PC-3 (cell line): ENCODE measurements at regions of chr19 and their contacts with region 1.

Region 1: GRCh38 chr19:56333505-56333904 is 18.9 kb upstream of the ZSCAN5A start:
- DNase-seq: peak; percentile 87
- ATAC-seq: peak; percentile 88
- H3K4me3 ChIP-seq: no peak overlapping the region
- H3K27ac ChIP-seq: no peak overlapping the region
- H3K4me1 ChIP-seq: no peaks in the 10 kb centered on the region
- H3K27me3 ChIP-seq: peaks cover 4% of the 10 kb centered on the region; the same call in 1 of the 2 replicates
- CTCF ChIP-seq: peak; percentile 92

Region 2: DNA sequence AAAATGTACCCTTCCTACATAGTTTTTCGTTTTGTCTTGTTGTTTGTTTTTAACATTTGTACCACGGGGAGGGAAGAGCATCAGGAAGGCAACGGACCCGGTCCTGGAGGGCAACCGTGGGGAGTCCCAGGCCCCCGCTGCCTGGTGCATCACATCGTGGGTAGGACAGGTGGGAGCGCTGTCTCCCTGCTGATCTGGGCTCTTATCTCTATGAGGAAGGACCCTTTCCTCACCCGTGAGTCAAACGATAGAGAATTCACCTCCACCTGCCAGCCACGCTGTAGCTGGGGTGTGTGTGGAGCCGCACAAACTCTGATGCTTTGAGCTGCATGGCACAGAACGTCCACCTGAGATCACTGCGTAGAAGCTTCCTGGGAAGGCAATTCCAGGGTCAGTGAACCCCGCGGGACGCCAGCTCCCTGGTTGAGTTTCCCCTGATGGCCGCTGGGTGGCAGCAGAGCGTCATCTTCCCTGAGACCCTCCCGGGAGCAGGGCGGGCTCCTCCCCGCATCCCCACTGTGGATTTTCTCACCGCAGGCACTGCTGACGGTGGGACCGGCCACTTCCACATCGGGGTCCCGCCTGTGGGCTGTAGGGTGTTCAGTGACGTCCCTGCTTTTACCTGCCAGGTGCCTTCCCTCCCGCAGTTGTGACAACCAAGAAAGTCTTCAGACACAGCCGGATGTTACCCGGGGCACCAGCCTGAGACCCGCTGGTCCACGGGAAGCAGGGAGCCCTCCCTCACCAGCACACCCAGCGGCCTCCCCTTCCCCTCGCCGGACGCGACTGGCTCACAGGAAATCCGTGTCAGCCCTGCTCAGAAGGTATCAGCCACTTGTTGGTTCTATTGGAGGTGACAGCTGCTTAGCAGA is 267.1 kb before region 1 on chr19:
- CTCF ChIA-PET with region 1: interaction called, 18 read pairs
- POLR2A ChIA-PET with region 1: no interaction called
- intact Hi-C with region 1: loop called (anchors 1 kb)
- DNase-seq: peak; percentile 70
- ATAC-seq: peak; percentile 88
- H3K4me3 ChIP-seq: peak overlapping the region; percentile 15; the same call in 1 of the 2 replicates
- H3K27ac ChIP-seq: no peak overlapping the region
- H3K4me1 ChIP-seq: peaks cover 4% of the 10 kb centered on the region; the same call in 1 of the 2 replicates
- H3K27me3 ChIP-seq: peaks cover 22% of the 10 kb centered on the region
- CTCF ChIP-seq: peak; percentile 94

Region 3: GRCh38 chr19:56252699-56253422 is 80.6 kb before region 1 on chr19:
- CTCF ChIA-PET with region 1: interaction called, 141 read pairs
- POLR2A ChIA-PET with region 1: interaction called, 3 read pairs
- intact Hi-C with region 1: loop called (anchors 1 kb)
- DNase-seq: peak; percentile 73
- ATAC-seq: peak; percentile 67
- H3K4me3 ChIP-seq: no peak overlapping the region
- H3K27ac ChIP-seq: no peak overlapping the region
- H3K4me1 ChIP-seq: no peaks in the 10 kb centered on the region
- H3K27me3 ChIP-seq: no peaks in the 10 kb centered on the region
- CTCF ChIP-seq: peak; percentile 90

Region 4: DNA sequence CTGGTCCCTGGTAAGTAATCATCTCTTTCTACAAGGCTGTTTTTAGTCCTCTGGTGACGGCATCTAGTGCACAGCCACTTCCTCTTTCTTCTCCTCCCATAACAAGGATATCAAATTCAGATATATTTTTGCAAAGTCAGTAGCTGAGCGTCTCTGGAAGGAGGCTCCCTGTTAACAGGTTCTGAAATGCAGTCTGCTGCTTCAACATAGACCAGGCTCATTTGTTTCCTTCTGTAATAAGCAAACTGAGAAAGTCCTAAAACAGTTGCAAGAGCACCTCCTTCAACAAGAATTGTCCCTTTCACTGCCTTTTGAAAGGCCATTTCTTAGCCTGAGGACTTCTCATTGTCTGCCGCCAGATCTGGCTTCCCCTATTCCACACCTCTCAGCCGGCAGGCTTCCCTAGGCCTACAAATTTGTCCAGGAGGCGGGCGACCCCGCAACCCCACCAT is 11.5 kb before region 1 on chr19:
- CTCF ChIA-PET with region 1: no interaction called
- POLR2A ChIA-PET with region 1: no interaction called
- intact Hi-C with region 1: no loop called
- DNase-seq: no peak
- ATAC-seq: no peak
- H3K4me3 ChIP-seq: no peak overlapping the region
- H3K27ac ChIP-seq: no peak overlapping the region
- H3K4me1 ChIP-seq: no peaks in the 10 kb centered on the region
- H3K27me3 ChIP-seq: peaks cover 25% of the 10 kb centered on the region; the same call in 1 of the 2 replicates
- CTCF ChIP-seq: no peak

Region 5: DNA sequence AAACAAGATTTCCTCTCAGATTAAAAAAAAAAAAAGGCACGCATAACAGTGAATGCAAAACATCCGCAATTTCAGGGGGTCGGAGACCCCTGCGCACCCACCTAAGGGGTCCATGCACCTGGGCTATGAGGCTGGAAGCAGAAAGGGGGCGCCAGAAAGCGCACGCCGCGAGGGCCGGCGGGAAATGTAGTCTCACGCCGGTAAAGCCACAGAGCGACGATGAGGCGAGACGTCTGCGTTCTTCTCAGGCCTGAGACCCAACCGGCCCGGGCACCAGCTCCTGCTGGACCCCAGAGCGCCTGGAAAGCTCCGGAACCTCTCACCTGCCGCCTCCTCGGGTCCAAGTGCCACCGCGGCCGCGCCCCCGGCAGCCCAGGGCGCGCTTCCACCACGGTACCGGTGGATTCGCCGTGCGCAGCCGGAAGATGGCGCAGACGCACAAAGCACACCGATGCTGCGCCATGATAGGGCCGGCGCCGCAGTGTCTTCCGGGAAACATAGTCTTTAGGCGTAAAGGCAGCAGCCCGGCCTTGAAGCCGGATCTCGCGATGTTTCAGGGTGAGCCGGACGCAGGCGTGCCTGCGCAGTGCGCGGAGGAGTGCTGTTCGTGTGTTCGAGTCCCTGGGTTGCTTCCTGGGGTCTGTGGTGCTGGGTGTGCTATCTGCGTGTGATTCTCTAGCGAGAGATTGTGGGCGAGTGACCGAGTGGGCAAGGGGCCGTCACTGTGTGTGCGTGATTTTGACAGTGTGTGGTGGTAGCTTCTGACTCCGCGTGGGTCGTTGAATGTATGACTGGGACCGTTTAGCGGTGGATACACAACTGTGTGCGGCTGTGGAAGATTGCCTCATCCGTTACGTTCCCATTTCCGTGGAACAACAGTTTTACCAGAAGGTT is 59.9 kb after region 1 on chr19 and contains the start of gene ZNF582:
- CTCF ChIA-PET with region 1: no interaction called
- POLR2A ChIA-PET with region 1: no interaction called
- intact Hi-C with region 1: no loop called
- DNase-seq: no peak
- ATAC-seq: no peak
- H3K4me3 ChIP-seq: no peak within 1 kb of the TSS
- H3K27ac ChIP-seq: no peak within 1 kb of the TSS
- H3K4me1 ChIP-seq: no peaks in the 10 kb centered on the region
- H3K27me3 ChIP-seq: no peaks in the 10 kb centered on the region
- CTCF ChIP-seq: no peak
- total RNA-seq, gene ZNF582: not detected in 2 replicates